Heart left ventricle (tissue), 16 donors: ENCODE measurements at regions of chr9 and their contacts with region 1.

Region 1: DNA sequence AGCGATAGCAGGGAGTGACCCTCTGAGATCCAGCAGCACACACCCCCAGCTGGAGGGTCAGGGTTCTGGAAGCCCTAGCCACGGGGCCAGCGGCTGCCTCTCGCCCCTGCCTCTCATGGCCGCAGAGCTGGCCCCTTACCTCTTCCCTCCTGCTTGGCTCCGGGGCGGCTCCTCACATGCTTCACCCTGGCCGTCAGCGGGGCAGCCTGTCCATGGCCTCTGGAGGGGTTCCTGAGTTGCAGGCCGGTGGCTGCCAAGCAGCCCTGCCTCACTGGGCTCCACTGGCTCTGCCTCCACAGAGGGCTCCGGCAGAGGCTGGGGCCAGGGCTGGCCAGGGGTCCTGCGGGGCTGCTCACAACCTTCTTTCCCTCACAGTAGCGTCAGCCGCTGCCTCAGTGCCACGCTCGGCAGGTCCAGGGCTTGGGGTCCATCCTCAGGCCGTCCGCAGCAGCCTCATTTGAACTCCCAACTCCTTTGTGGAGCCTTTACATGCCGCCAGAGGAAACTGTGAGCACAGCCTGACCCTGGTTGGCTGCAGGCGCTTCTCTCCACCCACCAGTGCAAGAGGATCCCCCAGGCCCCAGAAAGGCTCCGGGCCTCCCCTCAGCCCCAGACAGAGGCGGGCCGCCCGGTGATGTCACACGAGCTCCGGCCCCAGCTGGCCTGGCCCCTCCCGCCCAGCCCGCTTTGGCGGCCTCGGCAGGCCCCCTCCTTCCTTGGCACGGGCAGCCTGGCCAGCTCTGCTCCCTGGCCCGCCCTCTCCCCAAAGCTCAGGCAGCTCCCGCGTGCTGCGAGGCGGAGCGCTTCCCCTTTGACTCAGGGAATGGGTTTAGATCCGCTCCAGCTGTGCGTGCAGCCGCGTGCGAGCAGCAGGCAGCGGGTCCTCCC is at the start of gene ANGPTL2:
- DNase-seq: peak; percentile 94 to 96 (median 95)
- ATAC-seq: peak; percentile 87 to 95 (median 94)
- H3K4me3 ChIP-seq: peak within 1 kb of the TSS; percentile 40 to 92 (median 72)
- H3K27ac ChIP-seq: peak within 1 kb of the TSS; percentile 20 to 95 (median 91)
- H3K4me1 ChIP-seq: peaks cover 4 to 61% (median 49%) of the 10 kb centered on the region in 12 donors
- H3K27me3 ChIP-seq: peaks cover 0 to 12% (median 0%) of the 10 kb centered on the region in 9 donors
- CTCF ChIP-seq: peak in 2 of 12 donors; percentile 6 to 29
- POLR2A ChIP-seq: peak in 1 of 2 donors; percentile 88
- total RNA-seq, gene ANGPTL2: 25.6 to 92.5 (median 47.4) TPM

Region 2: GRCh38 chr9:126965541-126966428 is 156.6 kb before region 1 on chr9:
- intact Hi-C with region 1: loop called in 1 of 10 experiments (anchors 5 kb)
- DNase-seq: peak in 4 of 5 donors; percentile 43 to 60 (median 47)
- ATAC-seq: peak; percentile 74 to 89 (median 82)
- H3K4me3 ChIP-seq: no peak overlapping the region
- H3K27ac ChIP-seq: peak overlapping the region in 10 of 12 donors; percentile 13 to 86 (median 62)
- H3K4me1 ChIP-seq: peaks cover 0 to 32% (median 12%) of the 10 kb centered on the region in 12 donors
- H3K27me3 ChIP-seq: no peaks in the 10 kb centered on the region
- CTCF ChIP-seq: peak; percentile 67 to 88 (median 79)
- POLR2A ChIP-seq: no peak

Region 3: DNA sequence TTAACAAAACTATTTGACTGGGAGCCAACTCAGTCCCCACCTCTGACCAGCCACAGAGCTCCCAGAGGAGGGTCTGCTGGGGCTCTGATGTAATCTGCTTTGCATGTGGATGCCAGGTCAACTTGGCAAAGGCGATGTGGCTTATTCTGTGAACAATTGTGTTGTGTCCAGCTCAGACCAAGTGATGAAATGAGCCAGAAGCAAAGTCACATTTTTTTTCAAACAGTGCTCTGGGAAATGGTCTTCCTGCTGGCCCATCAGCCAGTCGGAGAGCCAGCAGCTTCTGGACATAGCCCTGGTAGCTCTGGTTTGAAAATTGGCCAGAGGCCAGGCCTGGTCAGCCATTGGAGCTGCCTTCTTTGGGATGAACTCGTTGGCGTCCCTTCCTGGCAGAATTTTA is 86.5 kb before region 1 on chr9:
- intact Hi-C with region 1: loop called in 1 of 10 experiments (anchors 5 kb)
- DNase-seq: peak; percentile 60 to 82 (median 70)
- ATAC-seq: peak in 3 of 4 donors; percentile 80 to 87 (median 81)
- H3K4me3 ChIP-seq: no peak overlapping the region
- H3K27ac ChIP-seq: peak overlapping the region in 11 of 12 donors; percentile 37 to 79 (median 58)
- H3K4me1 ChIP-seq: peaks cover 0 to 42% (median 30%) of the 10 kb centered on the region in 12 donors
- H3K27me3 ChIP-seq: no peaks in the 10 kb centered on the region
- CTCF ChIP-seq: no peak
- POLR2A ChIP-seq: no peak

Region 4: DNA sequence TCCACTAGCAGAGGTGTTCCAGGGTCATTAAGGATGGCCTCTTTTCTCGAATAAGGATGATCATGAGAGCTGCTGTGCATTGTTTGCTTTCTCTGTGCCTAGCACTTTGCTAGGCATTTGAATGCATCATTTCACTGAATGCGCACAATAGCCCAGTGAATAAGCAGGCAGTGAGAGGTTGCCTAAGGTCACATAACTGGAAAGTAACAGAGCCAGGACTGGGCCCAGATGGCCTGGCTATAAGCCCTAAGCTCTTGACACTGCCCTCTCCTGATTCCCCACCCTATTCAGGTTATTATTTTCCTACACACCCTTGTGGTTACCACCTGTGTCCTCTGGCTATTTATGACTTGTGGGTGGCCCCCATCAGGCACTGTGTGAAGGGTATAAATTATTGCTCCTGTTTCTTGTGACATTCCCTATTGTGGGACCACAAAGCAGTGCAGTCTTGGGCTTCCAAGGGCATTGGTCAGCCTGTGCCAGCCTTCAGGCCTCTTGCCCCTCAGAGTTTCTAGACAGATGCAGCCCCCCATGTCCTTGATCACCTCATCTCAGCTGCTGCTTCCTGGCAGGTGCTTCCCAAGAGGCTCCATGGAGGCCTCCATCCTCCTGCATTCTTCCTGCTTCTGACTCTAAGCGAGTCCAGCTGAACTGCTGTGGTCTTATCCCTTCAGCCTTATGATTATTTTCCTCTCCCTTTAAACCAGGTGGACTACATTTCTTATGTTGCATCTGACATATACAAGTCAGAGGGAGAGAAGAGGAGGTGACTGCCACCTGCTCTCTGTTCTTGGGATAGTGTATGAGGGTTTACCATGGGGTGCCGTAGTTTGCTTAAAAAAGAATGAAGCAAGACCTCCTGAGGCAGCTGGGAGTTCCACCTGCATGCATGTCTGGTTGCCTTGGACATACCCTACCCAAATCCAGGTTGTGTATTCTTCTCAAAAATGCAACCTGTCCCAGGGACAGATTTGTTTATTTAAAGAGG is 47.6 kb before region 1 on chr9:
- intact Hi-C with region 1: loop called in 1 of 10 experiments (anchors 5 kb)
- DNase-seq: peak in 4 of 5 donors; percentile 55 to 65 (median 60)
- ATAC-seq: peak; percentile 94 to 97 (median 95)
- H3K4me3 ChIP-seq: no peak overlapping the region
- H3K27ac ChIP-seq: peak overlapping the region in 10 of 12 donors; percentile 10 to 69 (median 58)
- H3K4me1 ChIP-seq: peaks cover 0 to 50% (median 30%) of the 10 kb centered on the region in 12 donors
- H3K27me3 ChIP-seq: no peaks in the 10 kb centered on the region
- CTCF ChIP-seq: no peak
- POLR2A ChIP-seq: no peak

Region 5: GRCh38 chr9:127166651-127167524 is 44.5 kb after region 1 on chr9:
- intact Hi-C with region 1: no loop called
- DNase-seq: no peak
- ATAC-seq: no peak
- H3K4me3 ChIP-seq: no peak overlapping the region
- H3K27ac ChIP-seq: no peak overlapping the region
- H3K4me1 ChIP-seq: peaks cover 0 to 29% (median 16%) of the 10 kb centered on the region in 12 donors
- H3K27me3 ChIP-seq: no peaks in the 10 kb centered on the region
- CTCF ChIP-seq: no peak
- POLR2A ChIP-seq: no peak

Region 6: DNA sequence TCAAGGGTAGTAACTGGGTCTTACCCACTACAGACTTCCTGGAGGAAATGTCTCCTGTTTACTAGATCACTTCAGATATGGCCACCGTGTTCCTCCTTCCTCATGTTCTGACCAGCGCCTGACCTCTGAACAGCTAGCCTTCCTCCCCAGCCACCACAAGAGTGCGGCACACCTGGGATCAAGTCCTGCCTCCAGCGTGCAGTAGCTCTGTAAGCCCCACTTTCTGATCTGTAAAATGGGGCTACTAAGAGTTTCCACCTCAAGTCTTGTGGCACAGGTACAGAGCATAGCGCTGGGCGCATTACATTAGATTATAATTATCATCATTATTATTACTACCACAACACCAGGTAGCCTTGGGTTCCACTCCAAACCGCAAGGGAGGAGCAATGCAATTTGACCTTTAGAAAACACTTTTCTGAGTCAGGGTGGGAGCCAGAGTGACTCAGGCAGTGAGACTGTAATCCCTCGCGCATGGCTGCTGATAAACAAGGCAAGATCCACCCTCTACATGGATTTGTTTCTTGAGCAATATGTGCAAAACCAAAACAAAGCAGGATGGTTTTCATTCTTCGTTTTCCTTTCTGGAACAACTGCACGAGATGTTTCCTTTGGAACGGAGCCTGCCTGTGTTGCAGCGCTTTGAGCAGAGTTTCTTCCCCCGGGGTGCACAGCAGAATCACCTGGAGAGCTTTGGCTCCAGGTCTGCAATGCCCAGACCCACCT is 65.0 kb after region 1 on chr9:
- intact Hi-C with region 1: loop called in 4 of 10 experiments (anchors 2 to 5 kb)
- DNase-seq: peak in 3 of 5 donors; percentile 62 to 83 (median 78)
- ATAC-seq: peak in 3 of 4 donors; percentile 42 to 63 (median 59)
- H3K4me3 ChIP-seq: no peak overlapping the region
- H3K27ac ChIP-seq: peak overlapping the region; percentile 57 to 96 (median 88)
- H3K4me1 ChIP-seq: peaks cover 2 to 61% (median 46%) of the 10 kb centered on the region in 12 donors
- H3K27me3 ChIP-seq: no peaks in the 10 kb centered on the region
- CTCF ChIP-seq: no peak
- POLR2A ChIP-seq: no peak